Heart right ventricle (tissue), 16 donors: ENCODE measurements at regions of chr13 and their contacts with region 1.

Region 1: DNA sequence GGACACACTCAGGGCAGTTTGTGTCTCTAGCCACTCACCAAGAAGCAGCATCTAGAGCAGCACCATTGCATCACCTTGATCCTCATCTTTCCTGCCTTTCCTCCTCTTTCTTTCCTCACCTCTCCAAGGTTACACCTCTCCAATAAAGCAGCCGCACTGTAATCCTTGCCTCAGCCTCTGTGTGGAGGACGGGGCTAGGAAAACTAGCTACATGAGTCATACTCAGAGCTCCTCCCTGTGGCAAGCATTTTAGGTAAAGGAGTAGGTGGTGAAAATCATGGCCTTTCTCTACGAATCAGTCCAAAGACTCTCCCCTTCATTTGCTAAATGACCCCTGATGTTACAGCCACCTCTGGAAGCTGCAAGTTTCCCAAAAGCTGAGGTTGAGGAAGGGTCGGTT is 108.9 kb downstream of the DNAJC15 start:
- DNase-seq: peak in 1 of 2 donors; percentile 21
- ATAC-seq: peak; percentile 28 to 84 (median 68)
- H3K4me3 ChIP-seq: no peak overlapping the region
- H3K27ac ChIP-seq: no peak overlapping the region
- H3K4me1 ChIP-seq: peaks cover 4 to 18% (median 9%) of the 10 kb centered on the region in 9 donors
- H3K27me3 ChIP-seq: peaks cover 0 to 8% (median 3%) of the 10 kb centered on the region in 7 donors
- CTCF ChIP-seq: peak in 8 of 9 donors; percentile 17 to 67 (median 47)

Region 2: DNA sequence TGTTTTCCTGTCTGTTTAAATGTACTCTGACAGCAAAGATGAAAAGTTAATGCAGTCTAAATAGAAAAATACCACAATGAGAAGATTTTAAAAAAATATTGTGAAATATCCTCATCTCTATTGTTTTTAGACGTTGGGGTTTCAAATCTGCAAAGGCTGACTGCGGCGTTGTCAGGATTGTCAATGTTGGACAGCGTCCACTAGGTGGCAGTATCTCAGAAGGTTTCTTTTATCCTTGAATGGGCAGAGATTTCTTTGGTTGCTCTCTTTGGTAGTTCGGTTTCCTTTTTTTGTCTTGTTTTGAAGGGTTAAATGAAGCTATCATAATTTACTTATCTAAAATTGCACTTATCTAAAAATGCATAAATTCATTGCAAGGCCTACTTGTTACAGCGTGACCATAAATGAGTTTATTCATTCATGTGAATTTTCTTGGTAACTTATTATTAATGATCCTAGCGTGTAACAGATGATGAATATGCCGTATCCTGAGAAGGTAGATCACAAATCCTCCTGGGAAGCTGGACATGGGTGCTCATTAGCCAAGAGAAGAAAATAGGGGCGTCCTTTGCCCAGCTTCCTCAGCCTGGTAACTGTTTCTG is 537.2 kb before region 1 on chr13:
- intact Hi-C with region 1: loop called in 2 of 10 experiments (anchors 10 kb)
- DNase-seq: peak in 1 of 2 donors; percentile 42
- ATAC-seq: peak in 2 of 8 donors; percentile 58 to 70
- H3K4me3 ChIP-seq: no peak overlapping the region
- H3K27ac ChIP-seq: no peak overlapping the region
- H3K4me1 ChIP-seq: peaks cover 0 to 9% (median 0%) of the 10 kb centered on the region in 9 donors
- H3K27me3 ChIP-seq: peaks cover 0 to 35% (median 11%) of the 10 kb centered on the region in 7 donors
- CTCF ChIP-seq: peak; percentile 73 to 90 (median 84)

Region 3: DNA sequence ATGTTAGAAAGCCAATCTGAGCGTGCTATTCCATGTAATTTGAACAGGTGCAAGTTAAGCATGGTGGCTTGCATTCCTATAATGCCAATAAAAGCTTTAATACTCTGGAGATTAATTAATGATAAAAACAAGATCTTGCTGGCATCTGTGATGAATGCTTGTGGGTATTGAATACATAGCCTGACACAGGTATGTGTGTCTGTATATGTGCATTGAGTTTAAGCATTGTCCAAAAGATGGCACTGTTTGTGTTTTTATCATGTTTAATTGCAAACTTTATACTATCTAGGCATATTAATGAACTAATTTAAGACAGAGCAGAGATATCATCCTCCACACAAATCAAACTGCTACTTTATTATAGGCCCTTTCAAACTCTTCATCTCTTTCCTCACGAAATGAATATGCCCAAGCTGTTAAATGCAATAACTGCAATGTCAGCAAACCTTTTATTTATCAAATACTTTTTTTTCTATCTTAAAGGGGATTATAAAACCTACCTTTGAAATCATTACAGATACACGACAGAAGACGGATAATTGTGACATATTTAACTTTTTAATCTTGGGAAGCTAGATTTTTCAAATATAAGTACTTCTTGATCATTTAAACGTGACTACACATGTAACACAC is 471.8 kb before region 1 on chr13:
- intact Hi-C with region 1: loop called in 1 of 10 experiments (anchors 10 kb)
- DNase-seq: no peak
- ATAC-seq: no peak
- H3K4me3 ChIP-seq: no peak overlapping the region
- H3K27ac ChIP-seq: no peak overlapping the region
- H3K4me1 ChIP-seq: no peaks in the 10 kb centered on the region
- H3K27me3 ChIP-seq: peaks cover 0 to 23% (median 0%) of the 10 kb centered on the region in 7 donors
- CTCF ChIP-seq: peak in 7 of 9 donors; percentile 18 to 56 (median 42)

Region 4: GRCh38 chr13:42883771-42884467 is 248.3 kb before region 1 on chr13:
- intact Hi-C with region 1: loop called in 2 of 10 experiments (anchors 5 to 10 kb)
- DNase-seq: no peak
- ATAC-seq: peak; percentile 26 to 79 (median 71)
- H3K4me3 ChIP-seq: no peak overlapping the region
- H3K27ac ChIP-seq: peak overlapping the region in 1 of 10 donors; percentile 9
- H3K4me1 ChIP-seq: peaks cover 0 to 41% (median 17%) of the 10 kb centered on the region in 9 donors
- H3K27me3 ChIP-seq: no peaks in the 10 kb centered on the region
- CTCF ChIP-seq: peak in 7 of 9 donors; percentile 13 to 49 (median 35)

Region 5: DNA sequence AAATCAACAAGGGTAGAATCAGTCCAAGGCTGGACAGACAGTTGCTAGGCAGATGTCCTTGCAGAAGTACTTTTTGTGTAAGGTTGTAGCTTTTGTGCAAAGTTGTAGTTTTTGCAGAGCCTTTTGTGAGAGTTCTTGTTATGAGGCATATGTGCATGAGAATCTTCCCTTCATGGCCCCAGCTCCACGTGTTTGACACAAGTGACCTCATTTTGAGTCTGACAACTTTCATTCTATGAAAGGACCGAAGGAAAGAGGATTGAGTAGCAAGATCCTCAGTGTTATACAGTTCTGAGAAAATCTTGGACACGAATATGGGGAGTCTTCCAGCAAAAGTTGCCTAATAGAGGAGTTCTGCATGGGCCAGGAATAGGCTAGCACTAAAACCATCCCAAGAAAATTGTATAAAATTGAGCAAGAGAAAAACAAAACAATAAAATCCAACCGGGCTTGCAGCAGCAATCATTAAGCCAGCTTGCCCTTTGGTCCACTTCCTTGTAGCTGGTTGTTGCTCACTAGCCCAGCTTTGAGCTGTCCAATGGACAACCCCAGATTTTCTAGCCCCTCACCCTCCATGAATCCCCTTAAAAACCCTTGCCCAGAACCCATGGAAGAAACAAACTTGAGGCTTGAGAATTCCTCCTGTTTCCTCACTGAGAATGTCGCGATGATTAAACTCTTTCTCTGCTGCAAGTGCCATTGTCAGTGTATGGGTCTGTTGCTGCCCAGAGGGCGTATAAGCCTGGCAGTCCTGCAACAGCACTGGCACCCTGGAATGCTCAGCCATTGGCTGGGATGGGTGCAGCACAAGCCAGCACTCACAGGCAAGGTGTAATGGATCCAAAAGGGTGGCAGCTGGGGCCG is 146.7 kb before region 1 on chr13:
- intact Hi-C with region 1: loop called in 1 of 10 experiments (anchors 10 kb)
- DNase-seq: peak in 1 of 2 donors; percentile 29
- ATAC-seq: peak in 7 of 8 donors; percentile 51 to 93 (median 72)
- H3K4me3 ChIP-seq: no peak overlapping the region
- H3K27ac ChIP-seq: peak overlapping the region in 3 of 10 donors; percentile 7 to 53 (median 36)
- H3K4me1 ChIP-seq: peaks cover 0 to 45% (median 27%) of the 10 kb centered on the region in 9 donors
- H3K27me3 ChIP-seq: no peaks in the 10 kb centered on the region
- CTCF ChIP-seq: no peak

Region 6: GRCh38 chr13:43180837-43181236 is 48.6 kb after region 1 on chr13:
- intact Hi-C with region 1: no loop called
- DNase-seq: no peak
- ATAC-seq: no peak
- H3K4me3 ChIP-seq: no peak overlapping the region
- H3K27ac ChIP-seq: no peak overlapping the region
- H3K4me1 ChIP-seq: no peaks in the 10 kb centered on the region
- H3K27me3 ChIP-seq: no peaks in the 10 kb centered on the region
- CTCF ChIP-seq: no peak

Region 7: DNA sequence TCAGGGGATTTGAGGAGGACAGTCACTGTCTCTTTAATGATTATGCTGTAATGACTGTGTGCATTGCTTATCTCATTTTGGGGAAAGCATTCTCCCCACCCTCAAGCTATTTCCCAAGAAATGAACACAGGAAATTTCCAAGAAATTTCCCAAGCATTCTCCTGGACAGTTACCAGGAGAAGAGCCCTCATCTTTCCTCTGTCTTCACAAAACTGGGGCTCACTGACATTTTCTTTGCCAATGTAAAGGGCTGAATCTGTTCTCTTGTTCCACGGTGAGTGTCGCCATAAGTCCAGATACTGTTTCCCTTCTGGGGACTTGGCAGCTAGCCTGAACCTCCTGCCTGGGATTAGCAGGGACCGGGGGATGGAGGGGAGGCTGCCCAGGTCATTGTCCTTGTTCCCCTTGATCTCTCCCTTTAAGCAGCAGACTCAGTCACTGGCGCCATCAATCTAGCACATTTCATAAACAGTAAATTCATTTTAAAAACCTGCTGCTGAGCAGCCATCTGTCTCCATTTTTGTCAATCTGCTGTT is 63.9 kb after region 1 on chr13:
- intact Hi-C with region 1: no loop called
- DNase-seq: peak; percentile 16 to 47
- ATAC-seq: peak; percentile 57 to 91 (median 80)
- H3K4me3 ChIP-seq: peak overlapping the region in 1 of 10 donors; percentile 21
- H3K27ac ChIP-seq: peak overlapping the region in 1 of 10 donors; percentile 67
- H3K4me1 ChIP-seq: peaks cover 0 to 16% (median 10%) of the 10 kb centered on the region in 9 donors
- H3K27me3 ChIP-seq: no peaks in the 10 kb centered on the region
- CTCF ChIP-seq: peak in 6 of 9 donors; percentile 14 to 58 (median 42)

Region 8: GRCh38 chr13:43377973-43378372 is 245.7 kb after region 1 on chr13:
- intact Hi-C with region 1: no loop called
- DNase-seq: no peak
- ATAC-seq: peak in 1 of 8 donors; percentile 29
- H3K4me3 ChIP-seq: no peak overlapping the region
- H3K27ac ChIP-seq: no peak overlapping the region
- H3K4me1 ChIP-seq: peaks cover 0 to 44% (median 9%) of the 10 kb centered on the region in 9 donors
- H3K27me3 ChIP-seq: peaks cover 0 to 27% (median 0%) of the 10 kb centered on the region in 7 donors
- CTCF ChIP-seq: no peak